HepG2 (cell line): ENCODE measurements at regions of chr16 and their contacts with region 1.

Region 1: DNA sequence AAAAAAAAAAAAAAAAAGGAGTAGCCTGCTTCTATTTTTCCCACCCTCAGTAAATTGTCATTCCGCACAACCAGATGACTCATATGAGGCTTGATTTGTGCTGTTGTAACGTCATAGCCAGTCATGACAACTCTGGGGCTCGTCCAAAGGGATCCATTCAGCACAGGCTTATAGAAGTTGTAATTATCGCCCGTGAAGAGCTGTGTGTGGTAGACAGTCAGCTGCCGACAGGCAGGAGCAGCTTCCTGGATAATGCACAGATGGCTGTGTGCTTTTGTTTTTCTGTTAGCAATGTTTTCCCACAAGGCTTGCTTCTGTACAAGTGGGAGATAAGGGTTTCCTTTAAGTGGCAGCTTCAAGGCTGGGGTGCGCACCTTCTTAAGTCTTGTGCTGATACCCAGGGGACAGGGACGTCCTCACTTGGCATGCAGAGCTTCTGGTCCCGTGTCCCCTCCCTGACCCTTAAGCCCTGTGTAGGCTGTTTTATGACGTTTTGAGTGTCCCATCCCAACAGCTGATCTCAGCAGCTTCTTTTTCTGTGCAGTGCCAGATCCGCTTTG is 26.0 kb downstream of the SNX29 start:
- DNase-seq: no peak
- ATAC-seq: no peak
- H3K4me3 ChIP-seq: no peak overlapping the region
- H3K27ac ChIP-seq: no peak overlapping the region
- H3K4me1 ChIP-seq: no peaks in the 10 kb centered on the region
- H3K27me3 ChIP-seq: no peaks in the 10 kb centered on the region
- CTCF ChIP-seq: no peak
- EP300 ChIP-seq: no peak
- POLR2A ChIP-seq: no peak
- RAD21 ChIP-seq: no peak

Region 2: GRCh38 chr16:11986521-11987057 is 15.9 kb before region 1 on chr16:
- CTCF ChIA-PET with region 1: no interaction called
- POLR2A ChIA-PET with region 1: no interaction called
- in situ Hi-C with region 1: no loop called
- intact Hi-C with region 1: no loop called
- DNase-seq: no peak
- ATAC-seq: no peak
- H3K4me3 ChIP-seq: no peak overlapping the region
- H3K27ac ChIP-seq: no peak overlapping the region
- H3K4me1 ChIP-seq: no peaks in the 10 kb centered on the region
- H3K27me3 ChIP-seq: no peaks in the 10 kb centered on the region
- CTCF ChIP-seq: no peak
- EP300 ChIP-seq: no peak
- POLR2A ChIP-seq: no peak
- RAD21 ChIP-seq: no peak

Region 3: GRCh38 chr16:13067648-13068047 is 1065.1 kb after region 1 on chr16:
- CTCF ChIA-PET with region 1: no interaction called
- POLR2A ChIA-PET with region 1: no interaction called
- in situ Hi-C with region 1: no loop called
- intact Hi-C with region 1: loop called (anchors 5 kb)
- DNase-seq: no peak
- ATAC-seq: no peak
- H3K4me3 ChIP-seq: no peak overlapping the region
- H3K27ac ChIP-seq: no peak overlapping the region
- H3K4me1 ChIP-seq: no peaks in the 10 kb centered on the region
- H3K27me3 ChIP-seq: no peaks in the 10 kb centered on the region
- CTCF ChIP-seq: no peak
- EP300 ChIP-seq: no peak
- POLR2A ChIP-seq: no peak
- RAD21 ChIP-seq: no peak